AG04449 (cell line): ENCODE measurements at regions of chr2 and their contacts with region 1.

Region 1: GRCh38 chr2:32166115-32166574 is 481 bp downstream of the SLC30A6 start:
- DNase-seq: no peak
- H3K4me3 ChIP-seq: peak overlapping the region; percentile 98
- CTCF ChIP-seq: no peak

Region 2: DNA sequence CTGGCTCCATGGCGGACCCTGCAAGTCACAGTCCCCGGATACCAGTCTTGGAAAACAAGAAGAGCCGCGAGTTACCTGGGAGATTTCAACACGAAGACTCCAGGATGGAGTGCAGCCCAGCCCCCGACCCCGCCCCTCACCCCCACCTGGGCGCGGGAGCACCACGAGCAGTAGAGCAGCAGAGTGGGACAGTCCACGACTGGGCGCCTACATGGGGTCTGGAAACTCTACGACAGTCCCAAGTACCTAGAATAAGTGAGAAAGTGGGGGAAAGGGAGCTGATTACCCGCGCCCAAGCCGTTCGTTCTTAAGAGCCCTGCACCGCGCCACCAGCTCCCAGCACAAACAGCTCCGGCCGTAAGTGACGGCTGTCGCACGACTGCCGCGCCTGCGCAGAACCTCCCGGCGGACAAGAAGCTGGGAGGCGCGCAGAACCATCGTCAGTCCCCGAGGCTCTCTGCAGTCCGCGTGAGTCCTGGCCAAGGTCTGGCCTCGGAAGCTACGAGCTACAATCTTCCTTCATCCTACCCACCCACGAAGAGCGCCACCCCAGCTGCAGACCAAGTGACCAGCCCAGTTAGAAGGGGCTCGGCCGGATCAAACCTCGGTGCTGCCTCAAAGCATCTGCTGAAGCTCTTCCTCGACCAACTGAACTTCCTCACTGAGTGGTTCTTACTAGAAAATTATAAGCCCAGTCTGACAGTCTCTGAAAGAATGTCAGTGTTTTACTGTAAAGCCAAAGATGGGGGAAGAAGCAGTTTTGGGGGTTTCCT is 126.5 kb before region 1 on chr2 and contains the start of gene DPY30:
- CTCF ChIA-PET with region 1: no interaction called
- POLR2A ChIA-PET with region 1: interaction called, 10 read pairs
- DNase-seq: peak; percentile 23
- H3K4me3 ChIP-seq: peak within 1 kb of the TSS; percentile 82
- CTCF ChIP-seq: no peak

Region 3: DNA sequence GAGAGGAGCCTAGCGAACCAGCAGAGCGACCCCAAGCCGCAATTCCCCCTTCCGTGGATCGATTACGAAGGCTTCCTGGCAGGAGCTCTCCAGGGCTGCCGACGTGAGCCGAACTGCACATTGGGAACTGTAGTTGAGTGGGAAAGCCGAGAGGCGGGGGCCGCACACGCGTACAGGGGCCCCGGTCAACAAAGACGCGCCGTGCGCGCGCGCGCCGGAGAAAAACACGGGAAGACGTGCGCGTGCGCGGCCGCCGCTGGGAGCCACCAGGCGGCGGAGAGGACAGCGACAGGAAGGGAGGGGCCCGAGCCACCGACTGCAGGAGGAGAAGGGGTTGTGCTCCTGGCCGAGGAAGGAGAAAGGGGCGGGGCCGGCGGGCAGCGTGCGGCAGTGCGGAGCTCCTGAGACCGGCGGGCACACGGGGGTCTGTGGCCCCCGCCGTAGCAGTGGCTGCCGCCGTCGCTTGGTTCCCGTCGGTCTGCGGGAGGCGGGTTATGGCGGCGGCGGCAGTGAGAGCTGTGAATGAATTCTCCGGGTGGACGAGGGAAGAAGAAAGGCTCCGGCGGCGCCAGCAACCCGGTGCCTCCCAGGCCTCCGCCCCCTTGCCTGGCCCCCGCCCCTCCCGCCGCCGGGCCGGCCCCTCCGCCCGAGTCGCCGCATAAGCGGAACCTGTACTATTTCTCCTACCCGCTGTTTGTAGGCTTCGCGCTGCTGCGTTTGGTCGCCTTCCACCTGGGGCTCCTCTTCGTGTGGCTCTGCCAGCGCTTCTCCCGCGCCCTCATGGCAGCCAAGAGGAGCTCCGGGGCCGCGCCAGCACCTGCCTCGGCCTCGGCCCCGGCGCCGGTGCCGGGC is 102.6 kb before region 1 on chr2 and contains the start of gene SPAST:
- CTCF ChIA-PET with region 1: no interaction called
- POLR2A ChIA-PET with region 1: interaction called, 11 read pairs
- DNase-seq: peak; percentile 59
- H3K4me3 ChIP-seq: peak within 1 kb of the TSS; percentile 78
- CTCF ChIP-seq: peak; percentile 76

Region 4: DNA sequence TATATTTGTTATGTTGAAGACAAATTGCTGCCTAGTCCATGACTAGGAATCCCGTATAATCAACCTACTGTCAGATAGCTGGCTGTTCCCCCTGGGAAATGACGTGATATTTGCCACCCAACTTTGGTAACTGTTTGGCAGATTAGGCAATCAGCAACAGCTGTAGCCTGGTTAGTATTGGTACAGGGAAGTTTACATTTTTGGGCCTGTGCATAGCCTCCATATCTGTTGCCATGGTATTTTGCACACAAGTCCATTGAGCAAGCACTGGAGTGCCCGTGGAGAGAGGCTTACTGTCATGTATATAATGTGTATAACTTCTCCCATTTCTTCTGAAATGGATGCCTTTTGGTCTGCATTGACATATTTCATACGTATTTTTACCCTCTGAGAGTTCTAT is 218.4 kb after region 1 on chr2:
- CTCF ChIA-PET with region 1: no interaction called
- POLR2A ChIA-PET with region 1: no interaction called
- DNase-seq: no peak
- H3K4me3 ChIP-seq: no peak overlapping the region
- CTCF ChIP-seq: no peak